Adrenal gland (tissue), 19 donors: ENCODE measurements at regions of chr22 and their contacts with region 1.

Region 1: GRCh38 chr22:50146439-50147238 is 23.9 kb upstream of the PANX2 start:
- DNase-seq: peak; percentile 65 to 88 (median 76)
- H3K4me3 ChIP-seq: no peak overlapping the region
- H3K27ac ChIP-seq: no peak overlapping the region
- H3K4me1 ChIP-seq: no peaks in the 10 kb centered on the region
- H3K27me3 ChIP-seq: no peaks in the 10 kb centered on the region
- CTCF ChIP-seq: peak; percentile 67 to 84 (median 76)
- POLR2A ChIP-seq: no peak

Region 2: DNA sequence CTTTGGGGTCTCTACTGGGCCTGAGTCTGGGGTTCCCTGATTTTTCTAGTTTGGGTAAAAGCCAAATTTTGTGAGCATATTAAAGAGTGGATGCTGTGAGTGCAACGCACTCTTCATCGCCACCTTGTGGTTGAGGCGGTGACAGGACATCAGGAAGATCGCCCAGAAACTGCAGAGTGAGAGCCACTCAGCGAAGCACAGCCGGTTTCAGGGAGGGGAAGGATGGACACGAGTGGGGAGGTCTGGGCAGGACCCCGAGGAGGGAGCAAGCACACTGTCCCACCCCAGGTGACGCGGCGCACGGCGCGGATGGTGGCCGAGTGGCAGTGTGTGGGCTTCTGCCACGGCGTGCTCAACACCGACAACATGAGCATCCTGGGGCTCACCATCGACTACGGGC is 63.3 kb after region 1 on chr22:
- intact Hi-C with region 1: loop called (anchors 2 to 5 kb)
- DNase-seq: peak; percentile 61 to 92 (median 80)
- H3K4me3 ChIP-seq: no peak overlapping the region
- H3K27ac ChIP-seq: peak overlapping the region in 1 of 5 donors; percentile 14
- H3K4me1 ChIP-seq: peaks cover 0 to 9% of the 10 kb centered on the region in 2 donors
- H3K27me3 ChIP-seq: no peaks in the 10 kb centered on the region
- CTCF ChIP-seq: peak; percentile 74 to 88 (median 84)
- POLR2A ChIP-seq: no peak